PC-9 (cell line): ENCODE measurements at regions of chr2 and their contacts with region 1.

Region 1: GRCh38 chr2:191051825-191052778 is 38.1 kb upstream of the STAT1 start:
- DNase-seq: no peak
- H3K4me3 ChIP-seq: no peak overlapping the region
- H3K27ac ChIP-seq: no peak overlapping the region
- H3K4me1 ChIP-seq: peaks cover 13% of the 10 kb centered on the region
- H3K27me3 ChIP-seq: no peaks in the 10 kb centered on the region
- CTCF ChIP-seq: peak; percentile 73

Region 2: DNA sequence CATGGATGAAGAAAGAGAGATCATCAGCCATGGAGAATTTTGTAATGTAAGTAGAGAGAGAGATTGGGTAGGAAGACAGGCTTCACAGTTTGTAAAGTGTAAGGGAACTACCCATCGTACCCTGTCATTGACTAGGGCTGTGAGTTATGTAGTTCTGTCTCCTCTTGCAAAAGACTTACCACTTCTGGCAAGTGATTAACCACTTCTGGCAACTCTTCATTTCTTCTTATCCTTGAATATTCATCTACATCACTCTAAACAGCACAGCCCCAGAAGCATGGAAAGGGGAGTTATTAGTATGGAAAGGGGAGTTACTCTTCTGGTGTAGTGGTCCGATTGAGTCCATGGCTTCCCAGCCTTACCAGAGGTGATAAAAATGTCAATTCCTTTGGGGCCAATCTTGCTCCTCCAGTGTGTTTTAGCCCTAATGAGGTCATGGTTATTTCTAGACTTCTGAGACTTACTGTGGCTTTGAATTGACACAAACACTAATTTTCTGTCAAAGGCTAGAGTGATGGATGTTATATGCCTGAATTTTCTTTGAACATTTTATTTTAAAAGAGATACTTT is 90.1 kb before region 1 on chr2:
- CTCF ChIA-PET with region 1: no interaction called
- POLR2A ChIA-PET with region 1: no interaction called
- intact Hi-C with region 1: no loop called
- DNase-seq: no peak
- H3K4me3 ChIP-seq: no peak overlapping the region
- H3K27ac ChIP-seq: no peak overlapping the region
- H3K4me1 ChIP-seq: no peaks in the 10 kb centered on the region
- H3K27me3 ChIP-seq: no peaks in the 10 kb centered on the region
- CTCF ChIP-seq: no peak

Region 3: GRCh38 chr2:191150600-191151330 is 98.7 kb after region 1 on chr2 and contains the start of gene STAT4:
- CTCF ChIA-PET with region 1: interaction called, 13 read pairs
- POLR2A ChIA-PET with region 1: no interaction called
- intact Hi-C with region 1: loop called (anchors 2 kb)
- DNase-seq: peak; percentile 28 to 48
- H3K4me3 ChIP-seq: peak within 1 kb of the TSS; percentile 86
- H3K27ac ChIP-seq: no peak within 1 kb of the TSS
- H3K4me1 ChIP-seq: 0 out of 2 replicates have a peak, but pooled peaks cover 4% of the 10 kb centered on the region
- H3K27me3 ChIP-seq: no peaks in the 10 kb centered on the region
- CTCF ChIP-seq: no peak
- total RNA-seq, gene STAT4: 0.23 and 0.70 TPM in 2 replicates

Region 4: DNA sequence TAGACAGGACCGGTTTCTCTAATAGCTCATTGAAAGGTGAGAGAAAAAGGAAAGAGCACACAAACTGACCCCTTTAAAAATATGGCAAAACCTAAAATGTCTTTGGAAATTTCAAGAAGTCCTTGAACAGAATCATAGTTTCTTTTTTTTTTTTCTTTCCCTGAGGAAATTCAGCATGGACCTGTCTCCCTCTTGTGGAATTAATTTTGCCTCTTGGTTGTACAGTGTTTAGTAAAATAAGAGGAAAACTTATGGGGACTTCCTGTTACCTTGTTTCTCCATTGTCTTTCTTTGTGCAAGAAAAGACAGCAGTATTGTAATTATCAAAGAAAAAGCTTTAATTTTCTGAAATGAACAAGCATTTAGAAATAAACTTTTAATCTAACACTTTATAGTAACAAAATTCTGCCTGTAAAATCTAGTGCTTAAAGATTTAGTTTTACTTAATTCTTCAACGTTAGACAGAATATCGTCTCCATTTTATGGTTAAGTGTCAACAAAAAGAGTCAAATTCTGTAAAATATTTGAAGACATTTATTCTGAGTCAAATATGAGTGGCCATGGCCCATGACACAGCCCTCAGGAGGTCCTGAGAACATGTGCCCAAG is 449.6 kb after region 1 on chr2:
- CTCF ChIA-PET with region 1: no interaction called
- POLR2A ChIA-PET with region 1: no interaction called
- intact Hi-C with region 1: loop called (anchors 2 kb)
- DNase-seq: no peak
- H3K4me3 ChIP-seq: no peak overlapping the region
- H3K27ac ChIP-seq: no peak overlapping the region
- H3K4me1 ChIP-seq: no peaks in the 10 kb centered on the region
- H3K27me3 ChIP-seq: no peaks in the 10 kb centered on the region
- CTCF ChIP-seq: peak; percentile 57

Region 5: DNA sequence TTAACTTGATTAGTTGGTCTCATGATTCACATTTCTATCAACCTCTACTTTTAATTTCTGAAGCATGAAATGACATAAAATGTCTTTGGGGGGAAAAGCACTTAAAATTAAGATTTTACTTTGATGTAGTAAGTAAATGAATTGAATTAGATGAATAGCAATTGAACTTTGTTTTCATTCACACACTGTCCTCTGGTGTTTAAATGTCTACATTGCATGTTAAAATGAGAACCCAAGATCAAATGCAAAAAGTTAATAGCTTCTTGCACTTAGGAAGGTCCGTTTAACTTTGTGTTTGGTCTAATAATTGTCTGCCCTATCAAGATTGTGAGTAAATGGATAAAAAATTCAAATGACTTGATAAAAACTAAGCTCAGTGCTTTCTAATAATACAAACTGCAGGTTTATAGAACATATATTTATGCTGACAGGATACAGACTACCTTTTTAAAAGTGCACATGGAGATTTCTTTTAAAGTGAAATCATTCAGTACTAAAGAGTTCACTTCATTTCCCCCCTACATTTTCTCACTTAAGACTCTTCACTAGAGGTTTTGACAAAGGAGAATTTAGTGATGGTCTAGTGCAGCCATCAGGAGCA is 469.6 kb after region 1 on chr2:
- CTCF ChIA-PET with region 1: interaction called, 3 read pairs
- POLR2A ChIA-PET with region 1: no interaction called
- intact Hi-C with region 1: loop called (anchors 1 kb)
- DNase-seq: no peak
- H3K4me3 ChIP-seq: no peak overlapping the region
- H3K27ac ChIP-seq: no peak overlapping the region
- H3K4me1 ChIP-seq: no peaks in the 10 kb centered on the region
- H3K27me3 ChIP-seq: no peaks in the 10 kb centered on the region
- CTCF ChIP-seq: peak; percentile 75